A673 (cell line): ENCODE measurements at regions of chr17 and their contacts with region 1.

Region 1: GRCh38 chr17:27236717-27237315 is 57.1 kb upstream of the WSB1 start:
- DNase-seq: peak; percentile 71
- H3K4me3 ChIP-seq: no peak overlapping the region
- H3K27ac ChIP-seq: no peak overlapping the region
- H3K4me1 ChIP-seq: peaks cover 2% of the 10 kb centered on the region
- H3K27me3 ChIP-seq: no peaks in the 10 kb centered on the region
- CTCF ChIP-seq: peak; percentile 91

Region 2: GRCh38 chr17:27327397-27327796 is 90.6 kb after region 1 on chr17:
- CTCF ChIA-PET with region 1: interaction called, 14 read pairs
- POLR2A ChIA-PET with region 1: no interaction called
- intact Hi-C with region 1: no loop called
- DNase-seq: no peak
- H3K4me3 ChIP-seq: no peak overlapping the region
- H3K27ac ChIP-seq: no peak overlapping the region
- H3K4me1 ChIP-seq: peaks cover 3% of the 10 kb centered on the region
- H3K27me3 ChIP-seq: no peaks in the 10 kb centered on the region
- CTCF ChIP-seq: no peak

Region 3: DNA sequence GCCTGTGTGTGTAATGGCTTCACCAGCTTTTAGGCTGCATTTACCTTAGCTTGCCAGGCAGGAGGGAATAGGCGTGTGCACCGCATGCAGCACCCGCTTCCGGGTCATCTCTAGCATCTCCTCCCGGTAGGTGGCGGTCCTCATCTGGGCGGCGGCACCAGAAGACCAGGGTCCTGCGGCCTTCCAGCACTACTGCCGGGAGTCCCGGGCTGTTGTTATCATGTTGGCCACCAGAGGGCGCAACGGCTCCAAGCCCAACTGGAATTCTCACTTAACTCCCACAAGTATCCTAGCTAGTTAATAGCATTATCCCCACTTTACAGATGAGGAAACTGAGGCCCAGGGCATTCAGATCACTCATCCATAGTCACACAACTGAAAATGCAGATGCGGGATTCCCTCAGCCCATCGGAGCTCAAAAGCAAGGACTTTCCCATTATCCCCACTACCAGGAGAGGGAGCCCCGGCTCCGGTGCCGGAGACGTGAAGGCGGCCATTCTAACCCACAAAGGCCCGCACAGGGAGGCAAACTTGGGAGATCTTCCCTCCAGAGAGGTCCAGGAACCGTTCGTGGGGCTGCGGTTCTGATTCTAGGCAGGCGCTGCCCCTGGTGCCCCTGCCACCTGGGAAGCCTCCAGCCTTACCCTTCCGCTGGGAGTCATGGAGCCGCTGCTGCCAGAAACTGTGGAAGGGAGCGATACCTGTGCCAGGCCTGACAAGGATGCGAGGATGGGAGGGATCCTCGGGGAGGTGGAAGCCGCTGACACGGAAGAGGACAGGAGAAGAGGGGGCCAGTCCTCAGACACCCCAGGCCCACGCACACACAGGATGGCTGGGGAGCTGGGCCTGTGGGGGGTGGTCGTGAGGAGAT is 418.1 kb after region 1 on chr17:
- CTCF ChIA-PET with region 1: no interaction called
- POLR2A ChIA-PET with region 1: no interaction called
- intact Hi-C with region 1: no loop called
- DNase-seq: peak; percentile 77
- H3K4me3 ChIP-seq: no peak overlapping the region
- H3K27ac ChIP-seq: no peak overlapping the region
- H3K4me1 ChIP-seq: no peaks in the 10 kb centered on the region
- H3K27me3 ChIP-seq: no peaks in the 10 kb centered on the region
- CTCF ChIP-seq: peak; percentile 95